Naive thymus-derived CD4-positive, alpha-beta T cell (primary cell): ENCODE measurements at regions of chr1 and their contacts with region 1.

Region 1: DNA sequence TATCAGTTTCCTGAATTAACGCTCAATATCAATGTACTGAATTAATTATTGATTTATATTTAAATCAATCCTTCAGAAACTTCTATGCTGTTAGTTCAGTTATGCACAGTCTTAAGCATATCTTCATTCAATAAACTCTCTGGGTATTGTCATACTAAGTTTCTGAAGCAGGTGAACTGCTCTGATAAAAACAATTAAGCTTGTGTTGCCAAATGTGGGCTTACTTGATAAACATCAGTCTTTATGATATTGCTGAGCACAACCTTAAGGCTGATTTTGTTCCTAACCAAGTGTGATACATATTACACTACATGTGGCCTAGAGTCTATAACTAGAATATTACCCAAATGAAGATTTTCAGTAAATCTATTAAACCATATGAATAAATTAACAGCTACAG is 67.6 kb downstream of the DPYD start:
- DNase-seq: no peak
- ATAC-seq: no peak
- H3K4me3 ChIP-seq: no peak overlapping the region
- H3K4me3 Mint-ChIP-seq: no peak overlapping the region
- H3K27ac ChIP-seq: no peak overlapping the region
- H3K27ac Mint-ChIP-seq: peak overlapping the region in 1 of 9 donors; percentile 70
- H3K4me1 ChIP-seq: peaks cover 0 to 5% of the 10 kb centered on the region in 2 donors
- H3K4me1 Mint-ChIP-seq: peaks cover 19 to 63% (median 53%) of the 10 kb centered on the region in 7 donors
- H3K27me3 ChIP-seq: no peaks in the 10 kb centered on the region
- H3K27me3 Mint-ChIP-seq: no peaks in the 10 kb centered on the region

Region 2: GRCh38 chr1:97834899-97835298 is 18.3 kb before region 1 on chr1:
- CTCF ChIA-PET with region 1: no interaction called
- POLR2A ChIA-PET with region 1: no interaction called
- intact Hi-C with region 1: loop called in 1 of 2 experiments (anchors 2 kb)
- DNase-seq: no peak
- ATAC-seq: no peak
- H3K4me3 ChIP-seq: no peak overlapping the region
- H3K4me3 Mint-ChIP-seq: no peak overlapping the region
- H3K27ac ChIP-seq: no peak overlapping the region
- H3K27ac Mint-ChIP-seq: no peak overlapping the region
- H3K4me1 ChIP-seq: no peaks in the 10 kb centered on the region
- H3K4me1 Mint-ChIP-seq: peaks cover 7 to 26% (median 10%) of the 10 kb centered on the region in 7 donors
- H3K27me3 ChIP-seq: no peaks in the 10 kb centered on the region
- H3K27me3 Mint-ChIP-seq: no peaks in the 10 kb centered on the region